ENCODE measurements at regions of chr2 and their contacts with region 1.

Region 1: GRCh38 chr2:43226558-43226954 is at the start of gene ZFP36L2:
- DNase-seq: peak; percentile 92
- ATAC-seq: peak; percentile 63
- H3K4me3 ChIP-seq: peak within 1 kb of the TSS; percentile 80 to 97 (median 89)
- H3K27ac ChIP-seq: peak within 1 kb of the TSS; percentile 95
- H3K4me1 ChIP-seq: peaks cover 54% of the 10 kb centered on the region
- H3K27me3 ChIP-seq: no peaks in the 10 kb centered on the region
- CTCF ChIP-seq: no peak; the same call in 1 of the 2 replicates
- EP300 ChIP-seq: peak in 1 of 2 experiments; percentile 15; a peak in 1 of 4 replicates
- POLR2A ChIP-seq: peak in 1 of 2 experiments; percentile 98; a peak in 2 of 4 replicates
- RAD21 ChIP-seq: peak; percentile 36; the same call in 1 of the 2 replicates
- total RNA-seq, gene ZFP36L2: 21.8 and 32.5 TPM in 2 replicates

Region 2: GRCh38 chr2:42859006-42859552 is 367.5 kb before region 1 on chr2:
- CTCF ChIA-PET with region 1: interaction called, 5 read pairs
- POLR2A ChIA-PET with region 1: interaction called, 4 read pairs
- in situ Hi-C with region 1: loop called (anchors 5 kb)
- intact Hi-C with region 1: loop called (anchors 1 kb)
- DNase-seq: peak; percentile 81
- ATAC-seq: no peak
- H3K4me3 ChIP-seq: no peak overlapping the region
- H3K27ac ChIP-seq: no peak overlapping the region
- H3K4me1 ChIP-seq: peaks cover 26% of the 10 kb centered on the region
- H3K27me3 ChIP-seq: peaks cover 2 to 16% of the 10 kb centered on the region in 2 experiments; a peak in 2 of 5 replicates
- CTCF ChIP-seq: peak; percentile 91
- EP300 ChIP-seq: 0 out of 4 replicates have a peak, but pooled peaks of 1 of the 2 experiments have one; percentile 3
- POLR2A ChIP-seq: no peak
- RAD21 ChIP-seq: peak; percentile 88

Region 3: DNA sequence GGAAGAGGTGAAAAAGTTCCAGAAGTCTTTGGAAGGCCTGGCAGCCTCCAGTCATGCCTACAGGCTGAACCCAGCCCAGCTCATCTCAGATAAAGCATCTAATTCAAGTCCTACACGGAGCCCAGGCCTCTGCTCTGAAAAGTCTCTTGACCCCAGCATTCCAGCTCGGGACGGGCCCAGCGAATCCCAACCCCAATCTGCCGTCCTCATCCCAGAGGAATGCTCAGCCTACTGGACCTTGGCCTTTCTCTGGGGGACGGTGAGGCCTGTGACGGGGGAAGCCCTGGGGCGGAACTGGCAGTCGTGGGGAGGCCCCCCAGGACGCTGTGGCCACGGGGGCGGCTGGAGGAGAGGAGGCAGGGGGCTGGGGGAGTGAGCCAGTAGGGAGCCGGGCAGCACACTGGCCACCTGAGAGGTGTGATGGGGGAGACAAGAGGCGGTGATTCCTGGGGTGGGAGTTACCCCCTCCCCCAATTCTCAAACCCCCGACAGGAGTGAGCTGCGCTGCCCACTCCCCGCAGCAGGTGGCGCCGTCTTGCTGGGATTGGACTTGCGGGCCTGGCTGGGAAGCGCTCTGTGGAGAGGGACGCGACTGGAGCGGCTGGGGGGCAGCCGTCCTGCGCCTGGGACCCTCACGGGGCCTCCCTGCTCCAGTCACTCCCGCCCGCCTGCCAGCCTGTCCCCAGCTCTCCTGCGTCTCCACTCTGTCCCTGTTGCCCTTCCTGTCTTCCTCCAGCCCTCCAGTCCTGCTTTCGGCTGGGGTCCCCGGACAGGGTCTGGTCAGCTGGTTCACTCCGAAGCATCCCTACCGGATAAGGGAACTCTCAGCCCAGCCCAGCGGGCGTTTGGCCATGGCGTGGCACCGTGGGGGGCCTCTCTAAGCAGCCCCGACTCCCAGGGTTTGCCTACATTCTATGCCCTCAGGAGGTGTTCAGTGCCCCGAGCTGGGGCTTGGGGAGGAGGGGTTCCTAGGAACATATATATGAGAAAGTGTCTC is 251.5 kb before region 1 on chr2:
- CTCF ChIA-PET with region 1: interaction called, 4 read pairs
- POLR2A ChIA-PET with region 1: interaction called, 275 read pairs
- in situ Hi-C with region 1: loop called (anchors 5 kb)
- intact Hi-C with region 1: loop called (anchors 1 kb)
- DNase-seq: peak; percentile 97
- ATAC-seq: peak; percentile 60
- H3K4me3 ChIP-seq: peak overlapping the region; percentile 8 to 67 (median 42); a peak in 4 of 6 replicates
- H3K27ac ChIP-seq: peak overlapping the region; percentile 93
- H3K4me1 ChIP-seq: peaks cover 99% of the 10 kb centered on the region
- H3K27me3 ChIP-seq: no peaks in the 10 kb centered on the region
- CTCF ChIP-seq: peak; percentile 99
- EP300 ChIP-seq: peak; percentile 63 to 93; a peak in 3 of 4 replicates
- POLR2A ChIP-seq: peak in 1 of 2 experiments; percentile 63; a peak in 2 of 4 replicates
- RAD21 ChIP-seq: peak; percentile 100

Region 4: GRCh38 chr2:43131024-43131889 is 95.3 kb before region 1 on chr2:
- CTCF ChIA-PET with region 1: interaction called, 34 read pairs
- POLR2A ChIA-PET with region 1: interaction called, 46 read pairs
- in situ Hi-C with region 1: loop called (anchors 5 kb)
- intact Hi-C with region 1: loop called (anchors 1 kb)
- DNase-seq: peak; percentile 80
- ATAC-seq: peak; percentile 68
- H3K4me3 ChIP-seq: peak overlapping the region in 1 of 3 experiments; percentile 34; a peak in 2 of 6 replicates
- H3K27ac ChIP-seq: peak overlapping the region; percentile 11
- H3K4me1 ChIP-seq: peaks cover 86% of the 10 kb centered on the region
- H3K27me3 ChIP-seq: no peaks in the 10 kb centered on the region
- CTCF ChIP-seq: peak; percentile 96
- EP300 ChIP-seq: peak in 1 of 2 experiments; percentile 15; a peak in 1 of 4 replicates
- POLR2A ChIP-seq: no peak
- RAD21 ChIP-seq: peak; percentile 97

Region 5: DNA sequence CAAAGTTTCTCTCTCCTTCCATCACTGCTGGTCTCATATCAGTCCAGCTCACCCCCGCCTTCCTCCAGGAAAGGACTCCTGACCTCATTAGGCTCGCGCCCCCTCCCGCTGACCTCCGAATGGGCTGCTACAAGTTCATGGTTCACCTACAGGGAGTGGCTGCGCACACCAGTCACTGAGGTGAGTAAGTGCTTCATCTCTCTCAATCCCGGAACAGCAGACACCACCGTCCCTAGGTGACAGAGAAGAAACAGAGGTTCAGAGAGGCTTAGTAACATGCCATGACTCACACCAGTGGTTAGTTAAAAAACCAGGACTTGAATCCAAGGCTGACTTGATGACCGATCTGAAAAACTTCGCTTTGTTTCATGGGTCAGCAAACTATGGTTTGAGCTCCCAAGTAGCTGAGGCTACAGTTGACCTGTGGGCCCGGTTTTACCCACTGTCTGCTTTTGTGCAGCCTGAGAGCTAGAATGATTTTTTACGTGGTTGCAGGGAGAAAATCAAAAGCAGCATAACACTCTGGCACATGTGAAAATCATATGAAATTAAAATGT is 42.1 kb before region 1 on chr2:
- CTCF ChIA-PET with region 1: no interaction called
- POLR2A ChIA-PET with region 1: interaction called, 79 read pairs
- in situ Hi-C with region 1: no loop called
- intact Hi-C with region 1: no loop called
- DNase-seq: peak; percentile 94
- ATAC-seq: peak; percentile 84
- H3K4me3 ChIP-seq: peak overlapping the region in 1 of 3 experiments; percentile 26; a peak in 1 of 6 replicates
- H3K27ac ChIP-seq: peak overlapping the region; percentile 42
- H3K4me1 ChIP-seq: peaks cover 82% of the 10 kb centered on the region
- H3K27me3 ChIP-seq: no peaks in the 10 kb centered on the region
- CTCF ChIP-seq: peak; percentile 62
- EP300 ChIP-seq: peak; percentile 19 to 82; a peak in 2 of 4 replicates
- POLR2A ChIP-seq: no peak
- RAD21 ChIP-seq: no peak

Region 6: DNA sequence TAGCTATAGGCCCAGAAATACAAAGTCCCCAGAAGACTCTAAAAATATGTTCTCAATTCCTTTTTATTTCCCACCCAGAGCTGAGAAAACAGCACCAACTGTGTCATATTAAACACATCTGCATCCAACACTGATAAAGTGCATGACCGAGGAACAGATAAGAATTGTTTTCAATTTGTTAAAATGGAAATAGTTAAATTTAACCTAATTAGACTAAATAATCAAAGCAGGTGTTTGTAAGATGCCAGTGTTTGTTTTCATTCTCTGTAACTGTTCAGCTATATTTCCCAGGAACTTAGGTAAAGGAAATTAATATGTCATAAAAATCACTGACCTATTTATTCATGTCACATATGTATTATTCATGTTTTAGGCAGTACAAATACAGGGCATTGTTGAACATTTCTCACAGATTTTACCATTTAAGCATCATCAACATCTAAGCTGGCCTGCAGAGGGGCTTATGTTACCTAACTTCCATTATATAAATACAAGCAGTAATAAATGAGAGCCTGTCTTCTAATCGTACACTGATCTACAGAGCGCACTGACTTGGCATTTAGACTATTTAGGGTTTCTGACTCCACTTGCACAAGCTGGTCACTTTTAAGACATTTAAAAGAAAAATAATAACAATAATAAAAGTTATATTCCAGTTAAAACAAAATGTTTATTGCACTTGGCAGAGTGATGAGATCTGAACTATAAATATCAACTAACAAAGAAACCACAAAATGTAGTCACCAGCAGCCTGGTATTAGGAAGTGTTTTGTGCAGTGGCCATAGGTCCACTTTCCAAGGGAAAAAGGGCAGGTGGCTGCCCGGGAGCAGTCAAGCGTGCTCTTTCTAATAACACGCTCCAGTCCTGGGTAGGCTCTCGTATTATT is 86.4 kb after region 1 on chr2:
- CTCF ChIA-PET with region 1: no interaction called
- POLR2A ChIA-PET with region 1: no interaction called
- in situ Hi-C with region 1: no loop called
- intact Hi-C with region 1: no loop called
- DNase-seq: no peak
- ATAC-seq: peak; percentile 27
- H3K4me3 ChIP-seq: no peak overlapping the region
- H3K27ac ChIP-seq: peak overlapping the region; percentile 2
- H3K4me1 ChIP-seq: peaks cover 64% of the 10 kb centered on the region
- H3K27me3 ChIP-seq: no peaks in the 10 kb centered on the region
- CTCF ChIP-seq: no peak
- EP300 ChIP-seq: no peak
- POLR2A ChIP-seq: no peak
- RAD21 ChIP-seq: no peak

Region 7: GRCh38 chr2:43397398-43397797 is 170.8 kb after region 1 on chr2:
- CTCF ChIA-PET with region 1: no interaction called
- POLR2A ChIA-PET with region 1: no interaction called
- in situ Hi-C with region 1: no loop called
- intact Hi-C with region 1: no loop called
- DNase-seq: no peak
- ATAC-seq: no peak
- H3K4me3 ChIP-seq: no peak overlapping the region
- H3K27ac ChIP-seq: no peak overlapping the region
- H3K4me1 ChIP-seq: peaks cover 26% of the 10 kb centered on the region
- H3K27me3 ChIP-seq: no peaks in the 10 kb centered on the region
- CTCF ChIP-seq: no peak
- EP300 ChIP-seq: no peak
- POLR2A ChIP-seq: no peak
- RAD21 ChIP-seq: no peak

Region 8: DNA sequence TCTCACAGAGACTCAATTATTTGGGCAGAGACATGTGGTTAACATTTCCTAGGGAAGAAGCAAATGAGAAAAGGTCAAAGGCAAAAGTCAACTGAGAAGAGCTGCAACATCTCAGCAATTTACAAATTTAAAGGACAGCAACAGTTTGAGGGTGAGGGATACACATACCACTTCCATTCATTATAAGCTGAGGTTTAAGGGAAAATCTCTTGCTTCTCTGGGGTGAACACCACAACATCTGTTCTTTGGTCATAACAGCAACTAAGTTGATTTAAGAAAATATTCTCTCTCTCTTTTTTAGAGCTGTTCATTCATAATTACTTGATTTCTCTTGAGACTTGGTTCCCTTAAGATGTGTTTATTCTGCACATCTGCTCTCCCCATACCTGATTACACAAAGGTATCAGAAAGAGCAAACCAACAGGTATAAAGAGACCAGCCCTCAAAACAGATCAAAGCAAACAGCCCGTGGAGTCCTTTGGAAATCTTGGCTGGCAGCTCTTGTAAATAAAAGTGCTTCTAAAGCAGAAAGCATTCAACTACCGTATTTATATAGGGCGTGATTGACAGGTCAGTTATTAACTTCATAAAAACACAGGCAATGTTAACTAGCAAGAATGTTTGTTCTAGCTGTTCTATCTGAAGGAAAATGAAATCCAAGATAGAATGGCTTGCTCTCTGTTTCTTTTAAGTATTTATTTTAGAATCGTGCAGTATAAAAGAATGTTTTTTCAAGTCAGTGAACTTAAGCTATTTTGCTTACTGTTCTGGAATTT is 236.5 kb after region 1 on chr2:
- CTCF ChIA-PET with region 1: no interaction called
- POLR2A ChIA-PET with region 1: interaction called, 11 read pairs
- in situ Hi-C with region 1: no loop called
- intact Hi-C with region 1: no loop called
- DNase-seq: peak; percentile 97
- ATAC-seq: peak; percentile 94
- H3K4me3 ChIP-seq: peak overlapping the region in 1 of 3 experiments; percentile 3; a peak in 1 of 6 replicates
- H3K27ac ChIP-seq: peak overlapping the region; percentile 38
- H3K4me1 ChIP-seq: peaks cover 78% of the 10 kb centered on the region
- H3K27me3 ChIP-seq: no peaks in the 10 kb centered on the region
- CTCF ChIP-seq: no peak
- EP300 ChIP-seq: peak in 1 of 2 experiments; percentile 95; a peak in 2 of 4 replicates
- POLR2A ChIP-seq: no peak
- RAD21 ChIP-seq: no peak